ENCODE measurements at regions of chr2 and their contacts with region 1.

Region 1: DNA sequence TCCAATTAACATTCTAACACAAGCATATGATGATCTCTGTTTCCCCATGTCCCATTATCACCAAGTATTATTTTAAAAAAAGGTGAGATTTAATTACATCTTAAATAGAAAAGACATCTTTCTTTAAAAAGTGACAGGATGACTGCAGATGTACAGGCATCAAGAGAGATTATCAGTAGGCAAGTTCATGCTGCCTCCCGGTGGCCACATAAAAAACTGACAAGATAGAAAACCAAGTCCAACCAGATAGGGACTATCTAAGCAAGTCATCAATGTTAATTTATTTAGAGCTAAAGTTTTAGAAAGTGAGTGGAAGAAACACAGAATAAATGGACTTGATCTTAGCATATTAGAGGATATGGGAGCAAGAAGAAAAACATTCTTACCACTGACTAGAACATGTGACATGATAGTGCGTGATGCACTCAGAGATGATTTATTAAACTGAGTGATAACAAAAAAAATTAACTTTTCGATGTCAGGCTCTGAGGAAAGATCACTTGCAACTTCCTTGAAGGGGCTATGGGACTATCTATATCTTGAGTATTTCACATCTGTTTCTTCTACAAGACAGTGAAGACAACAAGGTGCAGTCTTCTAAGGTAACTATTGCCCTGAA is 5.4 kb upstream of the TDRD15 start:
- DNase-seq: no peak
- H3K4me3 ChIP-seq: no peak overlapping the region
- H3K27ac ChIP-seq: no peak overlapping the region
- H3K4me1 ChIP-seq: no peaks in the 10 kb centered on the region
- H3K27me3 ChIP-seq: no peaks in the 10 kb centered on the region
- CTCF ChIP-seq: peak; percentile 38 to 52 (median 50)
- EP300 ChIP-seq: no peak
- POLR2A ChIP-seq: no peak

Region 2: GRCh38 chr2:20650880-20651730 is 467.3 kb before region 1 on chr2 and contains the start of gene HS1BP3:
- in situ Hi-C with region 1: loop called in 3 of 4 experiments (anchors 25 kb)
- intact Hi-C with region 1: no loop called
- DNase-seq: peak; percentile 91
- H3K4me3 ChIP-seq: peak within 1 kb of the TSS; percentile 87 to 92 (median 90)
- H3K27ac ChIP-seq: peak within 1 kb of the TSS; percentile 90 to 95 (median 94)
- H3K4me1 ChIP-seq: peaks cover 23 to 38% (median 31%) of the 10 kb centered on the region in 4 donors
- H3K27me3 ChIP-seq: no peaks in the 10 kb centered on the region
- CTCF ChIP-seq: peak in 4 of 5 experiments; percentile 84 to 94 (median 86)
- EP300 ChIP-seq: peak; percentile 21
- POLR2A ChIP-seq: peak; percentile 83
- total RNA-seq, gene HS1BP3: 29.5 to 44.2 (median 33.1) TPM

Region 3: GRCh38 chr2:20999906-21000645 is 118.3 kb before region 1 on chr2:
- in situ Hi-C with region 1: loop called in 1 of 4 experiments (anchors 25 kb)
- intact Hi-C with region 1: no loop called
- DNase-seq: no peak
- H3K4me3 ChIP-seq: no peak overlapping the region
- H3K27ac ChIP-seq: no peak overlapping the region
- H3K4me1 ChIP-seq: no peaks in the 10 kb centered on the region
- H3K27me3 ChIP-seq: no peaks in the 10 kb centered on the region
- CTCF ChIP-seq: no peak
- EP300 ChIP-seq: no peak
- POLR2A ChIP-seq: no peak

Region 4: GRCh38 chr2:21042958-21043743 is 75.3 kb before region 1 on chr2:
- in situ Hi-C with region 1: loop called in 1 of 4 experiments (anchors 10 kb)
- intact Hi-C with region 1: loop called (anchors 5 kb)
- DNase-seq: peak; percentile 62
- H3K4me3 ChIP-seq: no peak overlapping the region
- H3K27ac ChIP-seq: no peak overlapping the region
- H3K4me1 ChIP-seq: peaks cover 0 to 15% (median 4%) of the 10 kb centered on the region in 4 donors
- H3K27me3 ChIP-seq: peaks cover 18% of the 10 kb centered on the region
- CTCF ChIP-seq: peak; percentile 92 to 99 (median 98)
- EP300 ChIP-seq: no peak
- POLR2A ChIP-seq: no peak

Measured in transverse colon (tissue), 4 donors.